ENCODE measurements at regions of chr6 and their contacts with region 1.

Region 1: DNA sequence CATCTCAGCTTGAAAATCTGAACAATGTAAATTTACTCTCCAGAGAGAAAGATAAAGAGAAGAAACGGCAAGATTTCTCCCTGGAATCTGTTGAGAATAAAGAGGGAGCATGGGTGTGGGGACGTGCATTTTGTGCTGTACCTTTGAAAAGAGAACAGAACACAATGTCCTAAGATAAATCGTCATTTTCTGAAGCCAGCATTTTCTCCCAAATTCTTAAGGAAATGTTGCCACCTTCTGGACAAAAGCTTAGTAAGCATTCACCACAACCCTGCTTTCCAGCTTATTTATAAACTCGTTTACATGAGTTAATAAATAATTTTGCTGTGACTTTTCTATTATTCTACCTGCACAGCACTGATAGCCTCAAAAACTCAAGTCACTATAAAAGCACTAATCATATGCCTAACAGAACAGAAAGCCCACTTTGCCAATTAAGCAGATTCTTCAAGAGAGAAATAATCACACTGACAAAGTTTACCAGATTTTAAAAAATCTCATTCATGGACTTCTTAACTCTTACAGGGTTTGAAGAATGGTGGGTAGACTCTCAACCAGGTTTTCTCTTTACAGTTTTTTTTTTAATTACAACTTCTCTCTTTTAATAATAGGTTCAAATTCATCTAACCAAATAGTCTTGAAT is 155.8 kb downstream of the MBOAT1 start:
- DNase-seq: no peak

Region 2: GRCh38 chr6:18527836-18528743 is 1528.4 kb before region 1 on chr6:
- intact Hi-C with region 1: loop called (anchors 10 kb)
- DNase-seq: no peak

Region 3: GRCh38 chr6:18742406-18742805 is 1314.1 kb before region 1 on chr6:
- intact Hi-C with region 1: loop called (anchors 10 kb)
- DNase-seq: no peak

Region 4: DNA sequence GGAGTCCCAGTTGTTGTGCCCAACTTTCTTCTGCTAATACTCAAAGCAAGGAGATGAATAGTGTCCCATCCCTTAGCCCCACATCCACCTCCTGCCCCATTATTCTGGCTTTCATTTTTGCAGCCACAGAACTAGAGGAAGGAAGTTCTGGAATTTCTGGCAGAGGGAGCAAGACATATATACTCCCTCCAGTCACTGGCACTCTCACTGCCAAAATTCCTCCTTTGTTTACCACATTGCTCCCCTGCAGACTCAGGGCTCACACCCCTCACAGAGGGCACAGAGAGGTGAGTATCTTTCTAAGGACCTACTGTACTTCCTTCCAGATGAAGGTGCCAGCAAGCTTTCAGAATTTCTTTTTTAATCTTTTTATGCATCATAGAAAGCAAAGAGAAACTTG is 387.3 kb before region 1 on chr6:
- intact Hi-C with region 1: no loop called
- DNase-seq: no peak

Region 5: GRCh38 chr6:19804205-19805123 is 252.0 kb before region 1 on chr6:
- intact Hi-C with region 1: loop called (anchors 10 kb)
- DNase-seq: peak; percentile 87 to 99 (median 95)

Region 6: DNA sequence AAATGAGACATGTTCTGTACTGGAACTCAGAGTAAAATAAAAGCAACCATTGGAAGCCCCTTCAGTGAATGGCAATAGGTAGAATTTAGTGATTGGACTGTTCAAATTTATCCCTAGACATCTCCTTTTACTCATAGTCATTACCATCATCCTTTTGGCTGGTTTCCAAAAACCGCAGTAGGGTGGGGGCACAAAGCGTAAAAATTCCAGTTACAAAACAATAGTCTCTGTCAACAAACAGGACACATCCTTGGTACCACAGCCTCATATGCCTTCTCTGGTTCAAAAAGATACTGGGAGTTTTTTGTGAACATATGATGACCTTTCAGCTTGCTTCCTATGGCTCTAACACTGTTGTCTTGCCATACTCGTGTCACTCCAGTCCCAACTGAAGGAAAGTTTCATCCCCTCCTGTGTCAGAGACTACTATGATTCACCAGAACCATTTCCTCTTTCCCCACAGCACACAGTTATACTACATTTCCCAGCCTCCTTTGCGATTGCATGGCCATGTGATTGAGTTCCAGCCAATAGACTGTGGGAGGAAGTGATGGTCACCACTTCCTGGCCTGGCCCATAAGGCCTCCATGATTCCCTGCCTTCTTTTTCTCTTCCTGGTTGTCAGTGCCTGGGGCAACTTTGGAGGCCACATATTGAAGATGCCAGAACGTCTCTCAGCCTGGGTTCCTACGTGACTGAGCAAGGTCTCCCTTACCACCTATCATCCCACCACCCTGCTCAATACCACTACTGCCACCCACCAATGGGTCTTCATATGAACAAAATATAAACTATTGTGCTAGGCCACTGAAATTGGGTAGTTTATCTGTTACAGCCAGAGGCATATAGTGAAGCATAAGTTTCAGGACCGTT is 56.9 kb before region 1 on chr6:
- intact Hi-C with region 1: no loop called
- DNase-seq: no peak

Region 7: GRCh38 chr6:20173833-20174792 is 117.6 kb after region 1 on chr6:
- intact Hi-C with region 1: no loop called
- DNase-seq: no peak

Region 8: DNA sequence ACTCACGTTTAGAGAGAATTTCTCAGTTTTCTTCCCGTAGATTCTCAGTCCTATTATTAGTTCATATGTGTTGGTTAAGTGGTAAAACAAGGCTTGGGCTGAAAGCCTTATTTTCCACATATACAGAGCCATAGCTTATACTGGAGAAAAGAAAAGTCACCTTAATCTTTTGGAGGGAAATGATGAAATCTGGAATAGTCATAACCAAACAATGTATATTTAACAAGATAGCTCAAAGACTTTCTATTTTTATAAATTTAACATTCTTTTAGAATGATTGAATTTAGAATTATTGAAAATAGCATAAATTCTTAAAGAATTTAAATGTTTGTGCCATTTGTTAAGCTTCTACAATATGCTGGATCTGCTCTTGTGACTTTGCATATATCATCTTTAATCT is 563.6 kb after region 1 on chr6:
- intact Hi-C with region 1: no loop called
- DNase-seq: no peak

Measured in posterior cingulate gyrus (tissue), 11 donors.